ENCODE measurements at regions of chr6 and their contacts with region 1.

Region 1: GRCh38 chr6:163438940-163439335 is 24.4 kb downstream of the QKI start:
- DNase-seq: peak; percentile 65
- ATAC-seq: peak; percentile 50 to 62

Region 2: GRCh38 chr6:163554663-163555062 is 115.7 kb after region 1 on chr6:
- intact Hi-C with region 1: loop called in 1 of 2 experiments (anchors 10 kb)
- DNase-seq: peak; percentile 35
- ATAC-seq: peak in 1 of 2 donors; percentile 54

Measured in left cardiac atrium (tissue), 4 donors.